Left lung (tissue), 14 donors: ENCODE measurements at regions of chr19 and their contacts with region 1.

Region 1: GRCh38 chr19:42450314-42450934 is 7.7 kb upstream of the CXCL17 start:
- DNase-seq: peak in 3 of 4 donors; percentile 69 to 86 (median 74)
- ATAC-seq: peak; percentile 99
- H3K4me3 ChIP-seq: no peak overlapping the region
- H3K27ac ChIP-seq: peak overlapping the region in 1 of 2 donors; percentile 45
- H3K4me1 ChIP-seq: peaks cover 3 to 42% of the 10 kb centered on the region in 2 donors
- H3K27me3 ChIP-seq: no peaks in the 10 kb centered on the region
- CTCF ChIP-seq: peak; percentile 78 to 90

Region 2: GRCh38 chr19:42529248-42529764 is 78.9 kb after region 1 on chr19:
- intact Hi-C with region 1: loop called in 1 of 2 experiments (anchors 5 kb)
- DNase-seq: peak; percentile 25 to 83 (median 58)
- ATAC-seq: peak; percentile 97
- H3K4me3 ChIP-seq: peak overlapping the region in 1 of 2 donors; percentile 32
- H3K27ac ChIP-seq: peak overlapping the region; percentile 6 to 84
- H3K4me1 ChIP-seq: peaks cover 4 to 42% of the 10 kb centered on the region in 2 donors
- H3K27me3 ChIP-seq: no peaks in the 10 kb centered on the region
- CTCF ChIP-seq: peak; percentile 84 to 97

Region 3: DNA sequence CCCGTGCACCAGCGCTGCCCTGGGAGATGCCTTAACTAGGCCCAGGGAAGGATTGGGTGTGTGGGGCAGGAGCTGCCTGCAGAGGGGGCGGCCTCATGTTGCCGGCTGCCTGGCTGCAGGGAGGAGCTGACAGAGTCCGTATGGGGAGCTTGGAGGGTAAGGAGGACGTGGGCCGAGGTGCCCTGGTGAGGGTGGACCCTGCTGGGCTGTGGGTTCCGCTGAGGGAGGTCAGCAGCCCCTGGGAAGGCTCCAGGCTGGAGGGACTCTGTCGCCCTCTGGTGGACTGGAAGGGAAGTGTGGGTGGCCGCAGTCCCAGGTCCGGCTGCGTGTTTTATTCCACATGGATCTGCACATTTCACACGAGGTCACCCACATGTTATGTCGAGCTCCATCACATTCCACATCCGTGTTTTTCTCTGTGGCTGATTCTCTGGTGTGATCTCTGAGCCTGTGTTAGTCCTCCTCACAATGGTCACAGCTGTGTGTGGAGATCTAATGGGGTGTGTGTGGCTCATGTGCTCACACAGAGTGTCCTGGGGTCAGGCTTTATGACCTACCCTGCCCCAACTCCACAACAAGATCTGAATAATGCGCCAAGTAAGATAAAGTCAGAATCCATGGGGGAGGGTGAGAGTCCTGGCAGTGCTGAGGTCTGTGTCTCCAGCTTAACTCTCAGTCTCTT is 146.1 kb after region 1 on chr19:
- intact Hi-C with region 1: no loop called
- DNase-seq: peak in 2 of 4 donors; percentile 7 to 85
- ATAC-seq: peak; percentile 80
- H3K4me3 ChIP-seq: no peak overlapping the region
- H3K27ac ChIP-seq: no peak overlapping the region
- H3K4me1 ChIP-seq: peaks cover 0 to 15% of the 10 kb centered on the region in 2 donors
- H3K27me3 ChIP-seq: peaks cover 0 to 37% of the 10 kb centered on the region in 2 donors
- CTCF ChIP-seq: peak; percentile 92 to 93